Left ventricle myocardium inferior (tissue), 1 donor: ENCODE measurements at regions of chr17 and their contacts with region 1.

Region 1: DNA sequence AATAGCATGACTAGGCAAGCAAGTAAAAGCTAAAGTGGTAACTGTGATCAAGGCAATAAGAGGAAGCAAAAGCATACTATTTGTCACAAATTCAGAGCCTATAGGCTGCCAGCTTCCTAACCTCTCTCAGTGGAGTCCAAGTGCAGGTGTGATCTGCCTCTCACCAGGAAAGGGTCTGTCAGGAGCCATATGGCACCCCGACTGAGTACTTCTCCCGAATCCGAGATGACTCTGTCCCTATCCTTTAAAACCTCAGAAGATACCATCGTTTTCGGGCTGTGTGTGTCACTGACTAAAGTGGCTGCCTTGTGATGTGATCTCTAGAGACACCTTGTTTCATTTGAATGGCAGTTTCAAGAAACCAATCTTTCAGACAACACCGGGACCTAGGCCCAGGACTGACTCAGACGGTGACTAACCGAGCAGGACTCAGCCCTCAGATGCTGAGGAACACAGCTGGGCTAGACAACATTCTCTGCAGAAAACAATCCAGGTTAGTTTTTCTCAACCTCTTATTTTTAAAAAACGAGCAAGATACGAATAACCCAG is 63.6 kb downstream of the SMG6 start:
- DNase-seq: peak; percentile 63
- H3K4me3 ChIP-seq: peak overlapping the region; percentile 13
- H3K27ac ChIP-seq: peak overlapping the region; percentile 84
- H3K4me1 ChIP-seq: peaks cover 56% of the 10 kb centered on the region
- H3K27me3 ChIP-seq: no peaks in the 10 kb centered on the region
- CTCF ChIP-seq: no peak

Region 2: DNA sequence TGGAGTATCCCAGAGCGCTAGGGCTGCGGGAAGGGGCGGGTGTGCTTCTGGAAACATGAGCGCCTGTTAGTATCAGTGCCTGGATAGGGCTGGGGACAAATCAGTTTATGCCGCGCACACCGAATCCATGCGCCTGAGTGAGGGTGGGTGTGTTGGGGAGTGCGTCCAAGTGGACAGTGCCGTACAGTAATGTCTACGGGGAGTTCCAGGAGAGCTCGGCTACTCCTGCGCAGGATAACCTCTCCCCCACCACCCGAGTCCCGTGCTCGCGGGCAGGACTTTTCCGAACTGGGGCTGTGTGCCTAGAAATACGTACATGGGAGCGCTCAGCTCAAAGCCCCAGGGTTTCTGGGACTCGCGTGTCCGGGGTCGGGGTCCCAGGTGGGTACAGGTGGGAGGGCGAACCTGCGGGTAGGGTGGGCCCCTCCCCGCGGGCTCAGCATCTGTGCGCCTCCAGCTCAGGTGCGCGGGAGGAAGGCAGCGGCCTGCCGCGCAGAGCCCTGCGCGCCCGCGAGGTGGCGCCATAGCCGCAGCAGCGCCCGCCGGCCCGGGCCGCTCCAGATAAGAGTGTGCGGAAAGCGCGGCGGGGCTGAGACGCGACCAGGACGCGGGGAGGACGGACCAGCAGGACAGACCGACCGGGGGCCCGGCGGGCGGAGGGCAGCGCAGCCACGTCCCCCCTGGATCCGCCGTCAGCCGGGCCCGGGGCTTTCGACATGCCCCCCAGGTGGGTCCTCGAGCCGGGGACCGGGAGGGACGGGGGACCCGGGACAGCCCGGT is 185.3 kb before region 1 on chr17 and contains the start of gene HIC1:
- intact Hi-C with region 1: loop called (anchors 2 kb)
- DNase-seq: peak; percentile 83
- H3K4me3 ChIP-seq: peak within 1 kb of the TSS; percentile 84
- H3K27ac ChIP-seq: peak within 1 kb of the TSS; percentile 96
- H3K4me1 ChIP-seq: peaks cover 78% of the 10 kb centered on the region
- H3K27me3 ChIP-seq: peaks cover 85% of the 10 kb centered on the region
- CTCF ChIP-seq: peak; percentile 98
- total RNA-seq, gene HIC1: 23.5 TPM

Region 3: GRCh38 chr17:2094891-2095535 is 144.9 kb before region 1 on chr17:
- intact Hi-C with region 1: loop called (anchors 10 kb)
- DNase-seq: peak; percentile 75
- H3K4me3 ChIP-seq: peak overlapping the region; percentile 7
- H3K27ac ChIP-seq: peak overlapping the region; percentile 93
- H3K4me1 ChIP-seq: peaks cover 59% of the 10 kb centered on the region
- H3K27me3 ChIP-seq: no peaks in the 10 kb centered on the region
- CTCF ChIP-seq: peak; percentile 87

Region 4: GRCh38 chr17:2172077-2172851 is 67.7 kb before region 1 on chr17:
- intact Hi-C with region 1: loop called (anchors 10 kb)
- DNase-seq: peak; percentile 84
- H3K4me3 ChIP-seq: peak overlapping the region; percentile 42
- H3K27ac ChIP-seq: peak overlapping the region; percentile 90
- H3K4me1 ChIP-seq: peaks cover 80% of the 10 kb centered on the region
- H3K27me3 ChIP-seq: no peaks in the 10 kb centered on the region
- CTCF ChIP-seq: no peak